ENCODE measurements at regions of chr13 and their contacts with region 1.

Region 1: DNA sequence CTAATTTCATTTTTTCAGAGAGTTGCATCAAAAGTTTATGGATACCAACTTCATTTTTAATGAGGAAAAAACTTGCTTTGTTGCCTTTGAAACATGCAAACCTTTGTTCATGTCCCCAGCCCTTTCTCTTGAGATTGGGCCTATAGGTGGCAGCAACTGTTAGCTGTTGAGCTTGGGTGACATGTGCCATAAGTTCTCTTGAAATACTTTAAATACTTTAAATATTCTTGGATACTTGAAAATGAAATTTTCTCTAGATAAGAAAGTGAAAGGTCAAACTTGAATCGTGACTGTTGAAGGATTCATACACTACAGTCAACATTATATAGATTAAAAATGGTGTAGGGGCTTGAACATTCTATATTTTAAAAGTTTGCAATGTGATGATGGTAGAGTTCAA is 294.9 kb downstream of the NDFIP2 start:
- DNase-seq: peak in 2 of 3 donors; percentile 34 to 75
- ATAC-seq: peak; percentile 68
- H3K4me3 ChIP-seq: no peak overlapping the region
- H3K4me1 ChIP-seq: peaks cover 13% of the 10 kb centered on the region
- CTCF ChIP-seq: no peak

Region 2: GRCh38 chr13:79501538-79502232 is 274.1 kb before region 1 on chr13:
- intact Hi-C with region 1: no loop called
- DNase-seq: no peak
- ATAC-seq: peak; percentile 43
- H3K4me3 ChIP-seq: no peak overlapping the region
- H3K4me1 ChIP-seq: peaks cover 12% of the 10 kb centered on the region
- CTCF ChIP-seq: no peak

Region 3: GRCh38 chr13:79988573-79988972 is 212.7 kb after region 1 on chr13:
- intact Hi-C with region 1: loop called in 1 of 2 experiments (anchors 5 kb)
- DNase-seq: peak in 2 of 3 donors; percentile 38 to 42
- ATAC-seq: peak; percentile 81
- H3K4me3 ChIP-seq: no peak overlapping the region
- H3K4me1 ChIP-seq: no peaks in the 10 kb centered on the region
- CTCF ChIP-seq: no peak

Region 4: DNA sequence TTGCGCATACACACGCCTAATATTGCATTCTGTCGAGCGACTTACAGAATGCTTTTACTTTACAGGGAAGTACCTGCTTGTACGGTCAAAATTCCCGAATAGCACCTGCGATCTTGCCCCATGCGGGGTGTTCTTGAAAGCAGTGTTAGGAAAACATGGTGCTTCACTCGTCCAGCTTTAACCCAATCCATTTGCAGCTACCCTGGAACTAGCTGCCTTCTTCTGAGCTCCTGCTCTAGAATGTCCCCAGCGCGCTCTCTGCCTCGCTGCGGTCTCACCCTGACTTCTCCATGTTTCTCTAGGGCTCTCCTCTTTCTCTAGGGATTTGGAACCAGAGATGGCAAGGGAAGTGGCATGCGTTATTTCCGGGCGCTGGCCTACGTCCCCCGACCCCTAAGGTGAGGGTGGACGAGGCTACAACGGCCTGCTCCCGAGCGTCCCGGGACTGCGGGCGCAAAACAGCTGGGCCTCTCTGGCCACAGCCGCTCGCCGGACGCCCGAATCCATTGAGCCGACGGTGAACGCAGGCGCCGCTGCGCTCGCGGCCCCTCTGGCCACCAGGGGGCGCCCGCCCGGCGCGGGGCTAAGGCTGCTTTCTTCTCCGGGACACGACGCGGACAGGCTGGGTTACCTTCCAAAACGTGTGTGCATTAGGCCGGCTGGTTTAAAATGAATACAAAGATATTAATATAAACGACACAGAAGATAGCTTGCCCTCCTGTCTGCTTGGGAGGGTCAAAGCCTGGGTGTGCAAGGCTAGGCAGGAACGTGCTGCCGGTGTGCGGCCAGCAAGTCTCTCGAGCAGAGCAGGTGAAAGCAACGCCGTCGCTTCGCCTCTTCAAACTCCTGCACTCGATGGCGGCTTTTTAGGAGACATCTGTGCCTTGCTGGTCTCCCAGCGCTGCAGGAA is 566.9 kb after region 1 on chr13:
- intact Hi-C with region 1: loop called in 1 of 2 experiments (anchors 5 kb)
- DNase-seq: peak; percentile 86 to 93 (median 92)
- ATAC-seq: peak; percentile 71
- H3K4me3 ChIP-seq: peak overlapping the region; percentile 6
- H3K4me1 ChIP-seq: peaks cover 5% of the 10 kb centered on the region
- CTCF ChIP-seq: peak; percentile 97

Region 5: DNA sequence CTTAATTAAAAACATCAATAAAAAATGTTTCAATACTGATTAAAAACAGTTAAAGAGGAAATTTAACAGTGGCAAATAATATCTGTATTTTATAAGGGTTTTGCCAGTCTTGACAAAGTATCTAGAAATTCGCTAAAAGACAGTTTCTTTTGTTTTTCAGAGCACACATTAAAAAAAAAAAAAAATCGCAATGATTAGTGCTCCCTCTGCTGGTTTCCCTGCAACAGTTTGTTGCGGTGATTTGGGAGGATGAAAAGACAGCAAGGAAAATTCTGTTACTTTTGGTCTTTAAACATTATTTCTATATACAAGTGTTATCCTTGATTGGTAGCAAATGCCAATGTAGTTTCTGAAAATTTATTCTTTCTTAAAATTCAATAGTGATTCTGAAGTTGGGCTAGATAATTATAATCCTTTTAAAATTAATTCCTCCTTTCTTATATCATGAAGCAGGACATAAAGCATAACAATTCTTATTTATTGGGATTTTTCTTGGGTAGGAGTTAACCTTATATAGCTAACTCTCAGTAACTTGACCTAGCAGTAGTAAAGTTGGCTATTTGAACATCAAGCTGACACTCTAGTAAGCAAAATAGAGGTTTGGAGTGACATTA is 588.2 kb after region 1 on chr13:
- intact Hi-C with region 1: loop called in 1 of 2 experiments (anchors 5 kb)
- DNase-seq: peak in 1 of 3 donors; percentile 12
- ATAC-seq: no peak
- H3K4me3 ChIP-seq: no peak overlapping the region
- H3K4me1 ChIP-seq: peaks cover 4% of the 10 kb centered on the region
- CTCF ChIP-seq: peak; percentile 24

Measured in mucosa of descending colon (tissue), 3 donors.